GM13977 (cell line): ENCODE measurements at regions of chr1 and their contacts with region 1.

Region 1: GRCh38 chr1:16978567-16979474 is 1.6 kb downstream of the MFAP2 start:
- DNase-seq: no peak
- CTCF ChIP-seq: no peak

Region 2: GRCh38 chr1:17045634-17046333 is 67.0 kb after region 1 on chr1:
- in situ Hi-C with region 1: loop called (anchors 10 kb)
- DNase-seq: peak; percentile 33
- CTCF ChIP-seq: peak; percentile 63